Activated CD4-positive, alpha-beta T cell treated with anti-CD3 and anti-CD28 coated beads, Interleukin-2, amount 10 ng/mL, durations not matched to agents 7 days and 5 days (primary cell): ENCODE measurements at regions of chr11 and their contacts with region 1.

Region 1: GRCh38 chr11:102347462-102348370 is 702 bp downstream of the BIRC2 start:
- DNase-seq: peak; percentile 24
- H3K4me3 Mint-ChIP-seq: peak overlapping the region; percentile 91
- H3K27ac Mint-ChIP-seq: peak overlapping the region; percentile 99
- H3K4me1 Mint-ChIP-seq: peaks cover 30% of the 10 kb centered on the region
- H3K27me3 Mint-ChIP-seq: no peaks in the 10 kb centered on the region

Region 2: DNA sequence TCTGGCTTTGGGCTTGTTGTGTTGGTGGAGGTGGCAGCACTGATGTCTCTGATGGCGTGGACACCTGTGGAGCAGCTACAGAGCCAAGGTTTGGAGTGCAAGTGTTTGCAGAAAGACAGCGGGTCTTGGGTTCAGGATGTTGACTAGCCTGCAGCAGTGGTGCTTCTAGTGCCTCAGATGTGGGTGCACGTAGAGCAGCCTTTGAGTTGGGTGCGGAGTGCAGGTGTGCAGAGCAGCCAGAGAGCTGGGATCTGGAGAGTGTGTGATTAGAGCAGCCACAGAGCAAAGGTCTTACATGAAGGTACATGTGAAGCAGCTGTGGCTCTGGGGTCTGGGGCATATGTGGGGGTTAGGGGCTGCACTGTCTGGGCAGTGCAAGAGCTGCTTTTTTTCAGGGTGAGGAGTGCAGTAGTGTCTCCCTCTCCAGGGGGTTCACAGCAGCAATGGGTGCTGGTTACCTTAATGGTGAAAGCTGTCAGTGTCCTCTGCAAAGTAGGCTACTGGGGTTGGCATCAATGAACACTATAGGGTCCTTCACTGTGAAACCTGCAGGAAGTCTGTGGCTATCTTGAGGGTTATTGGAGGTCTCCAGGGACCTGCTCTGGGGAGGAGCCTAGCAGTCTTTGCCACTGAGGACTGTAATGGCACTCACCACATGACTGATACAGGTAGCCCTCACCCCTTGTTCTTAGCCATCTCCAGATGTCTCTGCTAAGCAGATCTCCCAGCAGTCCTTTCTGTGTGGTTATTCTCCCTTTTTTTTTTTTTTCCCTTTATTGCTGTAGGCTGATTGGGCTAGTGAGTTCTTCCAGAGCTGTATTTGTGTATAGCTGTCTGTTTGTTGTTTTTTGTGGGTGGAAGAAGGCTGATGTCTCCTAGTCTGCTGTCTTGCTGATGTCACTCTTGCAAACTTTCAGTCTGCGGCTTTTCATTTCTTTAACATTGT is 13.6 kb after region 1 on chr11:
- CTCF ChIA-PET with region 1: interaction called, 17 read pairs
- POLR2A ChIA-PET with region 1: no interaction called
- DNase-seq: peak; percentile 71
- H3K4me3 Mint-ChIP-seq: peak overlapping the region; percentile 17
- H3K27ac Mint-ChIP-seq: peak overlapping the region; percentile 87
- H3K4me1 Mint-ChIP-seq: peaks cover 54% of the 10 kb centered on the region
- H3K27me3 Mint-ChIP-seq: no peaks in the 10 kb centered on the region